ENCODE measurements at regions of chr10 and their contacts with region 1.

Region 1: GRCh38 chr10:30454744-30455510 is 20.9 kb downstream of the MAP3K8 start:
- DNase-seq: no peak
- ATAC-seq: no peak
- H3K4me3 ChIP-seq: no peak overlapping the region
- H3K4me3 Mint-ChIP-seq: peak overlapping the region in 1 of 3 donors; percentile 72
- H3K27ac ChIP-seq: peak overlapping the region; percentile 59
- H3K27ac Mint-ChIP-seq: peak overlapping the region; percentile 86 to 88
- H3K4me1 ChIP-seq: peaks cover 9 to 24% of the 10 kb centered on the region in 2 experiments
- H3K4me1 Mint-ChIP-seq: peaks cover 18 to 38% (median 31%) of the 10 kb centered on the region in 3 donors
- H3K27me3 ChIP-seq: no peaks in the 10 kb centered on the region
- H3K27me3 Mint-ChIP-seq: no peaks in the 10 kb centered on the region

Region 2: GRCh38 chr10:30368065-30368718 is 86.7 kb before region 1 on chr10:
- CTCF ChIA-PET with region 1: no interaction called
- POLR2A ChIA-PET with region 1: interaction called in 1 of 2 experiments, 10 read pairs
- DNase-seq: no peak
- ATAC-seq: no peak
- H3K4me3 ChIP-seq: no peak overlapping the region
- H3K4me3 Mint-ChIP-seq: no peak overlapping the region
- H3K27ac ChIP-seq: no peak overlapping the region
- H3K27ac Mint-ChIP-seq: no peak overlapping the region
- H3K4me1 ChIP-seq: peaks cover 6% of the 10 kb centered on the region in 2 experiments
- H3K4me1 Mint-ChIP-seq: peaks cover 7 to 24% (median 19%) of the 10 kb centered on the region in 3 donors
- H3K27me3 ChIP-seq: peaks cover 0 to 4% of the 10 kb centered on the region in 2 experiments
- H3K27me3 Mint-ChIP-seq: peaks cover 0 to 2% of the 10 kb centered on the region in 2 donors

Region 3: GRCh38 chr10:30488316-30488715 is 33.4 kb after region 1 on chr10:
- CTCF ChIA-PET with region 1: no interaction called
- POLR2A ChIA-PET with region 1: no interaction called
- DNase-seq: no peak
- ATAC-seq: no peak
- H3K4me3 ChIP-seq: no peak overlapping the region
- H3K4me3 Mint-ChIP-seq: no peak overlapping the region
- H3K27ac ChIP-seq: no peak overlapping the region
- H3K27ac Mint-ChIP-seq: no peak overlapping the region
- H3K4me1 ChIP-seq: peaks cover 0 to 33% of the 10 kb centered on the region in 2 experiments
- H3K4me1 Mint-ChIP-seq: peaks cover 20 to 54% (median 41%) of the 10 kb centered on the region in 3 donors
- H3K27me3 ChIP-seq: no peaks in the 10 kb centered on the region
- H3K27me3 Mint-ChIP-seq: peaks cover 0 to 7% of the 10 kb centered on the region in 2 donors

Measured in T-cell (primary cell).